ENCODE measurements at regions of chr22 and their contacts with region 1.

Region 1: DNA sequence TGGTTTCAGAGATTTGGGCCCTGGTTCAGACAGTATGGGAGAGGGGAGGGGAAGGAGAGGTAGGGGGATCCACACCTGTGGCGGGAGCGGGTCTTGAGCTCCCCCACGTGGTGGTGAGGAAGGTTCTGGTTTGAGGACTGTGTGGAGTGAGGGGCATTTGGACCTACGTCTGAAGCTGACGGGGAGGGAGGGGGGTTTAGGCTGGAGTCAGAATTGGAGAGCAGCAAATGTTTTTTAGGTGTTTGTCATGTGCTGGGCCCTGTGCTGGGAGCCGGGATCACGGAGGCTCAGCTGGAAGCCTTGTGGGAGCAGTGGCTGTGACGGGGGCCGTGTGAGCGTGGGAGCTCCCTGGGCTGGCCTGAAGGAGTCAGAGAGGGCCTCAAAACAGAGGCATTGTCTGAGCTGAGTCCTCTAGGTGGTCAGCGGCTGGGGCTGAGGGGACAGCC is 27.3 kb downstream of the SHANK3 start:
- DNase-seq: peak in 1 of 2 donors; percentile 15
- ATAC-seq: no peak
- H3K4me3 ChIP-seq: no peak overlapping the region
- H3K27ac ChIP-seq: no peak overlapping the region
- H3K4me1 ChIP-seq: peaks cover 5% of the 10 kb centered on the region
- H3K27me3 ChIP-seq: peaks cover 0 to 6% (median 0%) of the 10 kb centered on the region in 3 donors
- CTCF ChIP-seq: peak; percentile 5

Region 2: GRCh38 chr22:50525390-50526068 is 174.4 kb before region 1 on chr22 and contains the start of gene SCO2:
- intact Hi-C with region 1: no loop called
- DNase-seq: peak; percentile 96 to 98
- ATAC-seq: peak; percentile 84 to 90 (median 86)
- H3K4me3 ChIP-seq: peak within 1 kb of the TSS; percentile 95
- H3K27ac ChIP-seq: peak within 1 kb of the TSS; percentile 90
- H3K4me1 ChIP-seq: peaks cover 20% of the 10 kb centered on the region
- H3K27me3 ChIP-seq: peaks cover 0 to 18% (median 12%) of the 10 kb centered on the region in 3 donors
- CTCF ChIP-seq: peak; percentile 44
- total RNA-seq, gene SCO2: 0.97 TPM in 1 of 4 donors, not detected in the others

Region 3: GRCh38 chr22:50627642-50628542 is 72.1 kb before region 1 on chr22 and contains the start of gene ARSA:
- intact Hi-C with region 1: loop called in 1 of 2 experiments (anchors 5 kb)
- DNase-seq: peak; percentile 89 to 93
- ATAC-seq: peak; percentile 91 to 95 (median 94)
- H3K4me3 ChIP-seq: peak within 1 kb of the TSS; percentile 91
- H3K27ac ChIP-seq: peak within 1 kb of the TSS; percentile 80
- H3K4me1 ChIP-seq: peaks cover 6% of the 10 kb centered on the region
- H3K27me3 ChIP-seq: no peaks in the 10 kb centered on the region
- CTCF ChIP-seq: peak; percentile 34
- total RNA-seq, gene ARSA: 8.8 to 13.6 (median 10.4) TPM

Measured in psoas muscle (tissue), 8 donors.